Adrenal gland (tissue), 19 donors: ENCODE measurements at regions of chr11 and their contacts with region 1.

Region 1: DNA sequence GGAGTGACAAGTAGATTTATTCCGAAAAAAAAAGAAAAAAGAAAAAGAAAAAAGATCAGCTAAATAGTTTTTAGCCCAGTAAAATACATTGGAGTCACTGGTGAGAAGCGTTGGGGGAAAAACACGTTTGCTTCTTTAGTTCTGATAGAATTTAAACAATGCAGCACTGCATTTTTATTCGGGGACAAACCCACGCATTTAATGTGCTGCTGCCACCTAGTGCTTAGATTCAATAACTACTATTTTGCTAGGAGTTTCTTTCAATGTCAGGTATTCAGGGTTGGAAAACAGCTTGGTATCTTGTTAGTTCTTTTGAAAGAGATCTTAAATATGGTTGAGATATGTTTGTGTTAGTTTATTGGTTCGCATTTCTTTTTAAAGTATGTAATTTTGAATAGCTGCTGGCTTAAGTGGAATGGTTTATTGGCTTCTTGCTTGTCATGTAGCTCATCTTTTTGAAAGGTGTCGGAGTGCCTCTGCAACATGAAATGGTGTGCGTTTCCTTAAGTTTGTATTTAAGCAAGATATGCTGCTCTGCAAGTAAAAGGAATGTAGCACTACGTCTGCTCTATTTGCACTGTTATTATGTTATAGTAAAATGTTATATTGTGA is 41.9 kb downstream of the SVIP start:
- DNase-seq: peak in 5 of 7 donors; percentile 6 to 34 (median 21)
- H3K4me3 ChIP-seq: no peak overlapping the region
- H3K27ac ChIP-seq: no peak overlapping the region
- H3K4me1 ChIP-seq: peaks cover 0 to 4% of the 10 kb centered on the region in 2 donors
- H3K27me3 ChIP-seq: no peaks in the 10 kb centered on the region
- CTCF ChIP-seq: peak; percentile 48 to 75 (median 63)
- POLR2A ChIP-seq: no peak

Region 2: GRCh38 chr11:22343371-22344032 is 444.2 kb before region 1 on chr11:
- intact Hi-C with region 1: loop called in 1 of 2 experiments (anchors 5 kb)
- DNase-seq: no peak
- H3K4me3 ChIP-seq: no peak overlapping the region
- H3K27ac ChIP-seq: no peak overlapping the region
- H3K4me1 ChIP-seq: no peaks in the 10 kb centered on the region
- H3K27me3 ChIP-seq: peaks cover 47% of the 10 kb centered on the region
- CTCF ChIP-seq: no peak
- POLR2A ChIP-seq: no peak

Region 3: GRCh38 chr11:22957786-22958185 is 170.1 kb after region 1 on chr11:
- intact Hi-C with region 1: no loop called
- DNase-seq: no peak
- H3K4me3 ChIP-seq: no peak overlapping the region
- H3K27ac ChIP-seq: no peak overlapping the region
- H3K4me1 ChIP-seq: no peaks in the 10 kb centered on the region
- H3K27me3 ChIP-seq: no peaks in the 10 kb centered on the region
- CTCF ChIP-seq: no peak
- POLR2A ChIP-seq: no peak

Region 4: GRCh38 chr11:23021287-23021863 is 233.7 kb after region 1 on chr11:
- intact Hi-C with region 1: no loop called
- DNase-seq: peak; percentile 21 to 67 (median 29)
- H3K4me3 ChIP-seq: no peak overlapping the region
- H3K27ac ChIP-seq: no peak overlapping the region
- H3K4me1 ChIP-seq: no peaks in the 10 kb centered on the region
- H3K27me3 ChIP-seq: no peaks in the 10 kb centered on the region
- CTCF ChIP-seq: peak; percentile 49 to 63 (median 55)
- POLR2A ChIP-seq: no peak